Breast epithelium (tissue), 4 donors: ENCODE measurements at regions of chr6 and their contacts with region 1.

Region 1: GRCh38 chr6:35669451-35670045 is 19.2 kb downstream of the FKBP5 start:
- DNase-seq: no peak
- H3K4me3 ChIP-seq: no peak overlapping the region
- H3K27ac ChIP-seq: no peak overlapping the region
- H3K4me1 ChIP-seq: no peaks in the 10 kb centered on the region
- H3K27me3 ChIP-seq: no peaks in the 10 kb centered on the region
- CTCF ChIP-seq: no peak
- POLR2A ChIP-seq: no peak

Region 2: GRCh38 chr6:35717449-35718374 is 48.2 kb after region 1 on chr6:
- intact Hi-C with region 1: loop called (anchors 2 kb)
- DNase-seq: peak in 1 of 2 donors; percentile 28
- H3K4me3 ChIP-seq: no peak overlapping the region
- H3K27ac ChIP-seq: no peak overlapping the region
- H3K4me1 ChIP-seq: no peaks in the 10 kb centered on the region
- H3K27me3 ChIP-seq: no peaks in the 10 kb centered on the region
- CTCF ChIP-seq: no peak
- POLR2A ChIP-seq: no peak